Calu3 (cell line): ENCODE measurements at regions of chr7 and their contacts with region 1.

Region 1: DNA sequence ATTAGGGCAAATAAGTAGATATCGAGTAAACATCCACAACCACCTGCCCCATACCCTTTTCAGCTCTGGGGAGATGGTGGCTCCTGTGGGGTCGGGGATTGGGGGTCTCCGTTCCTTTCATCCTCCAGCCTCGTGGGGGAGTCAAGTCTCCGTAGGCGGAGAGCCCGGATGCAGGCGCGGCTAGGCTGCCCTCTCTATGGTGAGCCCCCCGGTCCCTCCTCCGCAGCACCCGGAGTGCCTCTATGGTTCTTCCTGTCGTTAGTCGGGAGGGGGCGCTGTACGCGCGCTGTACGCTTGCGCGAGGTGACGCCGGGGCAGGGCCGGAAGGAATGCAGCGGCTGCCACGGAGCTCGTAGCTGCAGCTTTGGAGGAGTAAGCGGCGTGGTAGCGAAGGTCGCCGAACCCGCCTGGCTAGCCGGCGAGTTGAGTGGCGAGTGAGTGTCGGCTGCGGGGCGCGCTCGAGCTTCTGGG is 14.8 kb upstream of the MMD2 start:
- DNase-seq: peak; percentile 99
- H3K4me3 Mint-ChIP-seq: peak overlapping the region; percentile 97
- H3K27ac Mint-ChIP-seq: peak overlapping the region; percentile 97
- H3K4me1 Mint-ChIP-seq: peaks cover 9% of the 10 kb centered on the region
- H3K27me3 Mint-ChIP-seq: no peaks in the 10 kb centered on the region
- CTCF ChIP-seq: peak; percentile 96

Region 2: DNA sequence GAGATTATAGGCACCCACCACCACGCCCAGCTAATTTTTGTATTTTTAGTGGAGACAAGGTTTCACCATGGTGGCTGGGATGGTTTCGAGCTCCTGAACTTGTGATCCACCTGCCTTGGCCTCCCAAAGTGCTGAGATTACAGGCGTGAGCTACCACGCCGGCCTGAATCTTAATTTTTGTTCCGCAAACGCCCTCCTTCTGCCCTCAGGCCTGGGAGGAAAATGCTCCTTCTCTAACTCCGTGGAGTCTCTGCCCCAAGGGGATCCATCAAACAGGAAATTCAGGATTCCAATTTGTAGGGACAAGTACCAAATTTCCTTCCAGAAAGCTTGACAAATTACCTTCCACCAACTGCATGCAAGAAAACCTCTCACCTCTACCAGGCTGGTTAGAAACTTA is 115.1 kb after region 1 on chr7:
- CTCF ChIA-PET with region 1: interaction called, 15 read pairs
- intact Hi-C with region 1: loop called (anchors 5 kb)
- DNase-seq: no peak
- H3K4me3 Mint-ChIP-seq: no peak overlapping the region
- H3K27ac Mint-ChIP-seq: no peak overlapping the region
- H3K4me1 Mint-ChIP-seq: no peaks in the 10 kb centered on the region
- H3K27me3 Mint-ChIP-seq: peaks cover 36% of the 10 kb centered on the region
- CTCF ChIP-seq: no peak

Region 3: GRCh38 chr7:5143935-5144903 is 170.5 kb after region 1 on chr7:
- CTCF ChIA-PET with region 1: no interaction called
- intact Hi-C with region 1: no loop called
- DNase-seq: peak; percentile 21
- H3K4me3 Mint-ChIP-seq: no peak overlapping the region
- H3K27ac Mint-ChIP-seq: no peak overlapping the region
- H3K4me1 Mint-ChIP-seq: no peaks in the 10 kb centered on the region
- H3K27me3 Mint-ChIP-seq: peaks cover 23% of the 10 kb centered on the region
- CTCF ChIP-seq: no peak